ENCODE measurements at regions of chr19 and their contacts with region 1.

Region 1: GRCh38 chr19:44093931-44094765 is at the start of gene ZNF224:
- DNase-seq: peak; percentile 73 to 84 (median 76)
- H3K4me3 ChIP-seq: peak within 1 kb of the TSS; percentile 65 to 75
- H3K4me3 Mint-ChIP-seq: peak within 1 kb of the TSS; percentile 85 to 99 (median 98)
- H3K27ac ChIP-seq: peak within 1 kb of the TSS; percentile 69
- H3K27ac Mint-ChIP-seq: peak within 1 kb of the TSS; percentile 58 to 97 (median 90)
- H3K4me1 ChIP-seq: peaks cover 9% of the 10 kb centered on the region
- H3K4me1 Mint-ChIP-seq: peaks cover 9 to 33% (median 23%) of the 10 kb centered on the region in 4 donors
- H3K27me3 ChIP-seq: no peaks in the 10 kb centered on the region
- H3K27me3 Mint-ChIP-seq: no peaks in the 10 kb centered on the region
- total RNA-seq, gene ZNF224: 86.9 to 91.2 TPM

Region 2: DNA sequence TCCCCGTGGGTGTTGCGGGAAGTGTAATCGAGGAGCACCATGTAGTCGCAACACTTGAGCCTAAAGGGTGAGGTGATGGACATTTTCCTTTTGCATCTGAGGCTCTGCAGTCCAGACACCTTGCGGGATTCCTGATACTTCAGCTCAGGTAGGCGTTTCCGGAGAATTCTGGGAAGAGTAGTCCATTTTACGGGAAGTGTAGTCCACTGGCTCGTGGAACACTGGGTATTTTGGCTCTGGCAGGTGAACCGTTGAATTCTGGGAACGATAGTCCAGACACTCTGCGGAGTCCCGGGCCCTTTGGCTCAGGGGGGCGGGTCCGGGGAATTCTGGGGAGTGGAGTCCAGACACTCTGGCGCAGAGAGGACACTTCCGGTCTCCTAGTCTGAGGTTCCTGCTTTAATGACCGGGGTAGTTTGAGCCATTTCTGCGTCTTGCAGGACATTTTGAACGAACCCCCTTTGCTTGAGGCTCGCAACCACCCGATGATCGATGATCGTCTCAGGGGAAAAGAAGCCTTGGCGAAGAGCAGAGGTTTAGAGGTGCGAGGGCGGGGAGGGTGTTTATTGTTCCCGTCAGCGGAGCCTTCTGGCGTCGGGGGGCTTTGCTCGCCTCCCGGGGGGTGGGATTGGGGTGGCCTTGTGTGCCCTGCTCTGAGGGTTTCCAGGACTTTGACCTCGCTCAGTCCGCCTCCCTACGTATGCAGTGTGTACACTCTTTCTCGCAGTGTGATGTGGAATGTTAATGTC is 42.3 kb before region 1 on chr19 and contains the start of gene ZNF223:
- CTCF ChIA-PET with region 1: interaction called, 6 read pairs
- POLR2A ChIA-PET with region 1: no interaction called
- intact Hi-C with region 1: loop called (anchors 1 kb)
- DNase-seq: peak; percentile 40 to 51 (median 45)
- H3K4me3 ChIP-seq: peak within 1 kb of the TSS; percentile 61 to 76
- H3K4me3 Mint-ChIP-seq: peak within 1 kb of the TSS; percentile 86 to 97 (median 94)
- H3K27ac ChIP-seq: no peak within 1 kb of the TSS
- H3K27ac Mint-ChIP-seq: peak within 1 kb of the TSS; percentile 27 to 88 (median 84)
- H3K4me1 ChIP-seq: peaks cover 8% of the 10 kb centered on the region
- H3K4me1 Mint-ChIP-seq: peaks cover 18 to 28% (median 26%) of the 10 kb centered on the region in 4 donors
- H3K27me3 ChIP-seq: no peaks in the 10 kb centered on the region
- H3K27me3 Mint-ChIP-seq: peaks cover 3 to 4% of the 10 kb centered on the region in 2 donors
- total RNA-seq, gene ZNF223: 6.8 to 8.0 TPM

Region 3: DNA sequence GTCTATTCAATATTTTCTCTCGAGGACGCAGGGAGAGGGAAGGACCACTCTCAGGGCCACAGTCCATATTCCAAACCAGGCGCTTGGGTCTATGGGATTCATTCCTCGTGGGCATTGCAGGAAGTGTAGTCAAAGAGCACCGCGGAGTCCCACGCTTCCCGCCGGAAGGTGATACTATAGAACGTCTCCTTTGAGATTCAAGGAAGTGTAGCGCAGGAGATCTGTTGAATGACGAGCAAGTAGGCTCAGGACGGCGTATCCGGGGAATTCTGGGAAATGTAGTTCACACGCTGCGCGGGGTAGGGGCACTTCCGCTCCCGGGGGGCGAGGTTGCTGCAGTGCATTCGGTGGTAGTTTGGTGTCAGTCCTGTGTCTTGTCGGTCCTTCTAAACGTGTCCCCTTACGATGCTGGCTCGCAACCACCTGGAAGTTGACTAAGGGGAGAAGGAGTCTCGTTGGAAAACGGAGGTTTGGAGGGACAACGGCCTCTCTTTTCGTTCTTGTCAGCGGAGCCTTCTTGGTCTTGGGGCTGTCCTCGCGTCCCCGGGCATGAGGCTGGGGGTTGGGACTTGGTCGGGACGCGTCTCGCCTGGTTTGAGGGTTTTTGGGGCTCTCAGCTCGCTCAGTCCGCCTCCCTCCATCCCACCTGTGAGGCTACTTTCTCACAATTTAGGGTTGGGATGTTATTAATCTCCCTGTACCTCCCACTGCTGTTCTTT is 22.2 kb before region 1 on chr19 and contains the start of gene ZNF284:
- CTCF ChIA-PET with region 1: interaction called, 3 read pairs
- POLR2A ChIA-PET with region 1: interaction called, 8 read pairs
- intact Hi-C with region 1: loop called (anchors 1 kb)
- DNase-seq: peak; percentile 82 to 85 (median 83)
- H3K4me3 ChIP-seq: peak within 1 kb of the TSS; percentile 54 to 76
- H3K4me3 Mint-ChIP-seq: peak within 1 kb of the TSS; percentile 85 to 96 (median 92)
- H3K27ac ChIP-seq: peak within 1 kb of the TSS; percentile 39
- H3K27ac Mint-ChIP-seq: peak within 1 kb of the TSS; percentile 45 to 93 (median 86)
- H3K4me1 ChIP-seq: peaks cover 21% of the 10 kb centered on the region
- H3K4me1 Mint-ChIP-seq: peaks cover 17 to 31% (median 24%) of the 10 kb centered on the region in 4 donors
- H3K27me3 ChIP-seq: no peaks in the 10 kb centered on the region
- H3K27me3 Mint-ChIP-seq: peaks cover 0 to 1% of the 10 kb centered on the region in 2 donors
- total RNA-seq, gene ZNF284: 5.4 to 5.7 TPM

Region 4: DNA sequence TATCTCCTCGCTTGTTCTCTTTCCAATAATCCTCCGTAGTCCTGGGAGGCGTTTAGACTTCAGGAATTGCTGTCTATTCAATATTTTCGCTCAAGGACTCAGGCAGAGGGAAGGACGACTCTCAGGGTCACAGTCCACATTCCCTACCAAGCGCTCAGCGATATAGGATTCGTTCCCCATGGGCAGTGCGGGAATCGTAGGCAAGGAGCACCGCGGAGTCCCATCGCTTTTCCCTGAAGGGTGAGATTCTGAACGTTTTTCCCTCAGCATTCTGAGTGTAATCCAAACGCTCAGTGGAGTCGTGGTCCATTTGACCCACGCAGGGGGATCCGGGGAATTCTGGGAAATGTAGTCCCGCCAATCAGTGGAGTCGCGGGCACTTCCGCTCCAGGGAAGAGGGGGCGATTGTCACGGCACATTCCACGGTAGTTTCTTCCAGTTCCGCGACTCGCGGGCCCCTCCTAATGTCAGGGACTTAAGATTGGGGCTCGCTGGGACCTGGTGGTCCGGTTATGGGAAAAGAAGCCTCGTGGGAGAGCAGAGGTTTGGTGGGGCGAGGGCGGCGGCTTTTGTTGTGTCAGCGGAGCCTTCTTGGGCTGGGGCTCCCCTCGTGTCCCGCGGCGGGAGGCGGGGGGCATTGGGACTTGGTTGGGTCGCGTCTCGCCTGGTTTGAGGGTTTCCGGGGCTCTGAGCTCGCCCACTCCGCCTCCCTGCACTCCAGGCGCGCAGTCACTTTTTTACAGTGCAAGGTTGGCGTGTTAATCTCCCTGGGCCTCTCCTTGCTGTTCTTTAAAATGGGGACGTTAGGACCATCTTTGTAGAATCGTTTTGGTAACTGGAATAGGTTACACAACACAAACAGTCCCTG is 47.3 kb after region 1 on chr19 and contains the start of gene ZNF234:
- CTCF ChIA-PET with region 1: no interaction called
- POLR2A ChIA-PET with region 1: no interaction called
- intact Hi-C with region 1: loop called (anchors 1 kb)
- DNase-seq: peak; percentile 58 to 65 (median 64)
- H3K4me3 ChIP-seq: peak within 1 kb of the TSS; percentile 90 to 97
- H3K4me3 Mint-ChIP-seq: peak within 1 kb of the TSS; percentile 91 to 98 (median 95)
- H3K27ac ChIP-seq: peak within 1 kb of the TSS; percentile 48
- H3K27ac Mint-ChIP-seq: peak within 1 kb of the TSS; percentile 35 to 90 (median 89)
- H3K4me1 ChIP-seq: peaks cover 15% of the 10 kb centered on the region
- H3K4me1 Mint-ChIP-seq: peaks cover 7 to 32% (median 22%) of the 10 kb centered on the region in 4 donors
- H3K27me3 ChIP-seq: no peaks in the 10 kb centered on the region
- H3K27me3 Mint-ChIP-seq: no peaks in the 10 kb centered on the region
- total RNA-seq, gene ZNF234: 23.9 to 28.9 TPM